Posterior cingulate gyrus (tissue), 11 donors: ENCODE measurements at regions of chr16 and their contacts with region 1.

Region 1: DNA sequence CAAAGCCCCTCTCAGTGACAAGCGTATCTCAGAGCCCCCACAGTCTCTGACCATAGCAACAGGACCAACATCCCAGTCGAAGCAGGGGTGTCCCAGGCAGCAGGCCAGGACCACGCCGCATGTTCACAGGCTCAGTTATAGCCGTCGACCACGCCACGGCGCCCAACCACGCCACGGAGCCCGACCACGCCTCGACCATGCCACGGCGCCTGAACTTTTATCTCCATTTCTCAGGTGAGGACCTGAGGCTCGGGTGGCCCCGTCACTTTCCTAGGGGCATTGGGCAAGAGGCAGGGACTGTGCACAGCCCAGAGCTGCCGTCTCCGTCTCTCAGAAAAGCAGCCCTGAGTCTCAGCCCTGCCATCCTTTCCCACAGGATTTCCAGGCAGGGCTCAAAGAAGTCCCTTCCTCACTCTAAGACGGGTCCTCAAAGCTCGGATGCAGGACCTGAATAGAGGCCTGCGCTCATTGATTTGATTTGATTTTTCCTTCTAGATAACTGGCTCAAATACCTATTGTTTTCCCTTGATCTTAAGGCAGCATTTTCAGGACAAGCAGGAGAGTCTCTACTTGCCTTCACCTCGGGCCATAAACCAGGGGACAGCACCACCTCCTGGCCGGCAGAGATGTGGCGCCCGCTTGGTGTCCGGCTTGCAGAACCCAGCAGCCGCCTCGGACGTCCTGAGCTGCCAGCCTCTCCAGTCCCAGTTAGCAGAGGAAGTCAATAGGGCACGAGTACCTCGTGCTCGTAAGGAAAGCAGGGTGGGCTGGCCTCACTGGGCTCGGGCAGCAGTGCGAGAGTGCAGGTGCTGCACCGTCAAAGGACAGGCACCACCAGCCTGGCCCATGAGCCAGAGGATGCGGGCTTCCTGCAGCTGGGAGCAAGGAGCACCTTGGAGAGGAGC is 38.7 kb downstream of the C16orf95 start:
- DNase-seq: peak; percentile 61 to 97 (median 76)

Region 2: DNA sequence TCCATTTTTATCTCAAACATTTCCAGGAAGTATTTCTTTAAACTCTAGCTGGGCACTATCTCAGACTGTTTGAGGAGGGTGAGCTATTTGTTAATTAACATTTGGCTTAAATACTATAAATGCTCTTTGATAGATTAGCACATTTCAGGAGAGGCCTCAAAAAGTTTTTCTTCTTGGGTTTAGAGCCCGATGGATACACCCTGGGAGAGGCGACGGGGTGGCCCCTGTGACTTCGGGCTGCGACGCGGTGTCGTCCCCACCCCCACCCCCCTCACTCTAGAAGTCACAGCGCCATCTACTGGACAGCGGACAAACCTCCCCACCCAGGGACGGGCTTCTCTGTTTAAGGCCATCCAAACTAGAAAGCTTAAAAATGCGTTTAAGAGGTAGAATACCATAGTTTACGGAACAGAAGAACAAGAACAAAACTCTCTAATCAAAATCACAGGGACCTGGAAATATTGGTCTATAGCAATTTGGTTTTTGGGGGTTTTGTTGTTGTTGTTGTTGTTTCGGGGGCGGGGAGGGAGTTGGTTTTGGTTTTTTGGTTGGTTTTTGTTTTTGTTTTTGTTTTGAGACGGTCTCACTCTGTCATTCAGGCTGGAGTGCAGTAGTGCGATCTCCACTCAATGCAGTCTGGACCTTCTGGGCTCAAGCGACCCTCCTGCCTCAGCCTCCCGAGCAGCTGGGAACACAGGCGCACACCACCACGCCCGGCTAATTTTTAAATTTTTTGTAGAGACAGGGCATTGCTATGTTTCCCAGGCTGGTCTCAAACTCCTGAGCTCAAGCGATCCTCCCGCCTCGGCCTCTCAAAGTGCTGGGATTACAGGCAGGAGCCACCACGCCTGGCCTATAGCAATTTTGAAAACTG is 215.6 kb before region 1 on chr16:
- intact Hi-C with region 1: loop called (anchors 10 kb)
- DNase-seq: peak in 7 of 10 donors; percentile 44 to 84 (median 63)

Region 3: DNA sequence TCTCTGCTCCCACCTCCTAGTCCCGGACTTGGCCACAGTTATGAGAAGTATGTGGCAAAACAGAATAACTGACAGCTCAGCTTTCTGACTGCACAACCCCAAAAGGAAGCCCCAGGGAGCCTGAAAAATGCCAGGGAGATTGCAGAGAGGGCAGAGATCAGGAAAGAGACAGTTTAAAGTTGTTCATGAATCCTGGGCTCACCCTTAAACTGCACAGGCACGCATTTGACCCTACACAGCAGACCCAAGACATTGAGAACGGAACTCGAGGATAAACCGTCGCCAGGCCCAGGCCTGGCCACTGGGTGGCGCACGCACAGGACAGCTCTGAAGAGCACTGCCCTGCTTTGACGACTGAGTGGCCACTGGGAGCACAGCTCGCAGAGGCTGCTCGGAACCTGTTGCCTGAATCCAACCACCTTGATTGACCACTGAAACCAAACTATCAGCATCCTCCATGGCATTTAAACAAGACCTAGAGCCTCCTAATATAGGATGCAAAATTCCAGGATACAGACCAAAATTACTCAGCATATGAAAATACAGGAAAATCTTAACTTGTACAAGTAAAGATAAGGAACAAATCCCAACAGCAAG is 75.3 kb before region 1 on chr16:
- intact Hi-C with region 1: loop called (anchors 5 kb)
- DNase-seq: peak in 7 of 10 donors; percentile 31 to 94 (median 54)